Heart left ventricle (tissue), 16 donors: ENCODE measurements at regions of chr18 and their contacts with region 1.

Region 1: GRCh38 chr18:30999186-30999585 is 43.4 kb downstream of the DSC3 start:
- DNase-seq: no peak
- ATAC-seq: no peak
- H3K4me3 ChIP-seq: no peak overlapping the region
- H3K27ac ChIP-seq: no peak overlapping the region
- H3K4me1 ChIP-seq: no peaks in the 10 kb centered on the region
- H3K27me3 ChIP-seq: peaks cover 0 to 5% (median 0%) of the 10 kb centered on the region in 9 donors
- CTCF ChIP-seq: peak in 9 of 12 donors; percentile 13 to 39 (median 23)
- POLR2A ChIP-seq: no peak

Region 2: DNA sequence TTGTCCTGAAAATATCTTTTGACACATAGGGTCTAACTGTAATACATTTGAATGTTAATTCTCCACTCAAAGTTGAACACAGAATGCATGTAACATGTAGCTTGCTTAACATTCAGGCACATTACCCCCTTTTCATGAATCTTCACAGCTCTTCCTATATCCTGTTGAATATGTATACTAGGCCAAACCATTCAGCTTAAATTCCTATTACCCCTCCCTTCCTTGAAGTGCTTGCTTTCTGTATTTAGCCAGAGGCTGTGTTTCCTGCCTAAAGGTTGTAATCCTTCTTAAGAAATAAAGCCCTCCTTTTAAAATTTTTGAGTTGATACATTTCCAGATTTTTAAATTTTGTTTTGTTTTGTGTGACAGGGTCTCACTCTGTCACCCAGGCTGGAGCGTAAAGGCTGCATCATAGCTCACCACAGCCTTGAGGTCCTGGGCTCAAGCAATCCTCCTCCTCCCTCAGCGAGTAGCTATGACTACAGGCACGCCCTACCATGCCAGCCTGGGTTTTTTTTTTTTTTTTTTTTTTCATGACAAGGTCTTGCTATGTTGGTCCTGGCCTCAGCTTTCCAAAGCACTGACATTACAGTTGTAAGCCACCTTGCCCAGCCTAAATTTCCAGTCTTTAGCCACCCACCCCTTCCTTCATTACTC is 314.2 kb before region 1 on chr18:
- intact Hi-C with region 1: no loop called
- DNase-seq: no peak
- ATAC-seq: no peak
- H3K4me3 ChIP-seq: no peak overlapping the region
- H3K27ac ChIP-seq: no peak overlapping the region
- H3K4me1 ChIP-seq: no peaks in the 10 kb centered on the region
- H3K27me3 ChIP-seq: no peaks in the 10 kb centered on the region
- CTCF ChIP-seq: no peak
- POLR2A ChIP-seq: no peak

Region 3: GRCh38 chr18:30945761-30946160 is 53.4 kb before region 1 on chr18:
- intact Hi-C with region 1: no loop called
- DNase-seq: no peak
- ATAC-seq: no peak
- H3K4me3 ChIP-seq: no peak overlapping the region
- H3K27ac ChIP-seq: no peak overlapping the region
- H3K4me1 ChIP-seq: no peaks in the 10 kb centered on the region
- H3K27me3 ChIP-seq: no peaks in the 10 kb centered on the region
- CTCF ChIP-seq: no peak
- POLR2A ChIP-seq: no peak

Region 4: DNA sequence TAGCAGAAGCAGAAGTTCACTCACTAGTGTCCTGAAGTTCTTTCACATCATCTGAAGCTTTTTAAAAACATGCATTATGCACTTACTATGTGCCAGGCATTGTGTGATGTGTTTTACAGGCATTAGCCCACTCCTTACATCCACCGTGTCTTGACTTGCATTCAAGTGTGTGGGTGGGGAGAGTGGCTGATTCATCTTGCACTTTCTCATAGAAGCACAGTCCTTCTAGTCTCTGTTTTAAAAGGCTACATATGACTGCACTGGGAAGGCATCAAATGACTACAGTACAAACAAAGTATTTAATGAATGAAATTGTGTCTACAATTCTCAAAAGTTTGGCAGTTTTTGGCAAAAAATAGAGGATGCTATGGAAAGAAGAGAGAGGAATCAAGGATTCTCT is 64.9 kb after region 1 on chr18:
- intact Hi-C with region 1: no loop called
- DNase-seq: no peak
- ATAC-seq: no peak
- H3K4me3 ChIP-seq: no peak overlapping the region
- H3K27ac ChIP-seq: no peak overlapping the region
- H3K4me1 ChIP-seq: no peaks in the 10 kb centered on the region
- H3K27me3 ChIP-seq: peaks cover 0 to 2% (median 0%) of the 10 kb centered on the region in 9 donors
- CTCF ChIP-seq: no peak
- POLR2A ChIP-seq: no peak

Region 5: GRCh38 chr18:31506024-31506742 is 507.0 kb after region 1 on chr18:
- intact Hi-C with region 1: loop called in 3 of 10 experiments (anchors 10 kb)
- DNase-seq: no peak
- ATAC-seq: no peak
- H3K4me3 ChIP-seq: no peak overlapping the region
- H3K27ac ChIP-seq: no peak overlapping the region
- H3K4me1 ChIP-seq: peaks cover 0 to 6% (median 0%) of the 10 kb centered on the region in 12 donors
- H3K27me3 ChIP-seq: no peaks in the 10 kb centered on the region
- CTCF ChIP-seq: peak; percentile 15 to 65 (median 50)
- POLR2A ChIP-seq: no peak

Region 6: GRCh38 chr18:31512203-31512764 is 513.1 kb after region 1 on chr18:
- intact Hi-C with region 1: loop called in 3 of 10 experiments (anchors 10 kb)
- DNase-seq: no peak
- ATAC-seq: peak in 3 of 4 donors; percentile 60 to 69 (median 62)
- H3K4me3 ChIP-seq: no peak overlapping the region
- H3K27ac ChIP-seq: no peak overlapping the region
- H3K4me1 ChIP-seq: peaks cover 0 to 18% (median 0%) of the 10 kb centered on the region in 12 donors
- H3K27me3 ChIP-seq: no peaks in the 10 kb centered on the region
- CTCF ChIP-seq: no peak
- POLR2A ChIP-seq: no peak

Region 7: GRCh38 chr18:31563778-31564177 is 564.6 kb after region 1 on chr18:
- intact Hi-C with region 1: loop called in 1 of 10 experiments (anchors 5 kb)
- DNase-seq: no peak
- ATAC-seq: no peak
- H3K4me3 ChIP-seq: no peak overlapping the region
- H3K27ac ChIP-seq: no peak overlapping the region
- H3K4me1 ChIP-seq: peaks cover 0 to 5% (median 0%) of the 10 kb centered on the region in 12 donors
- H3K27me3 ChIP-seq: peaks cover 0 to 12% (median 0%) of the 10 kb centered on the region in 9 donors
- CTCF ChIP-seq: peak in 5 of 12 donors; percentile 5 to 28 (median 22)
- POLR2A ChIP-seq: no peak

Region 8: DNA sequence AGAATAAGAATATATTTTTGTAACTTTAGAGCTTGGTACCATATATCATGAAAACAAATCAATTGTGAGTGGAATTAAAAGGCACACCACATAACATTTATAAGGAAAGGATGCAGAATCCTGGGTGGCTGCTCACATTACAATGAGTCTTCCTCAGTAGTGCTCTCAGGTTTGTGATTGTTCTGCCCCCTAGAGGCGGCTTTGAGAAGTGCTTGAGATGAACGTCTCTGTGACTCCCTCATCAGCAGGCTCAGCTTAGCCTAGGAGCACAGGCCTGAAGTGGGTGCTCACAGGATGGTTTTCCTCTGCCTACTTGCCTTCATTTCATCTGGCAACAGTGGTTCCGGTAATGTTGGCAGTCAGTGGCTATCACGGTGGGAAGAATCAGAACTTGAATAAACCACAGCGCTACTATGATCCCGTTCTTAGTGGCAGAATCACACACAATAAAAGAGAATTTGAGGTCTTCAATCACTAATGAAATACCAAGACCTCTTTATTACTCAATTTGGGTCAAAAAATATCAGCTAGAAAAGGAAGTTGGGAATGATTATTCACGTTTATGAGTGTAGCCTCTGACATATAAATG is 723.3 kb after region 1 on chr18:
- intact Hi-C with region 1: loop called in 2 of 10 experiments (anchors 10 kb)
- DNase-seq: peak in 4 of 5 donors; percentile 51 to 75 (median 72)
- ATAC-seq: peak; percentile 63 to 90 (median 86)
- H3K4me3 ChIP-seq: no peak overlapping the region
- H3K27ac ChIP-seq: no peak overlapping the region
- H3K4me1 ChIP-seq: peaks cover 0 to 26% (median 3%) of the 10 kb centered on the region in 12 donors
- H3K27me3 ChIP-seq: peaks cover 0 to 9% (median 0%) of the 10 kb centered on the region in 9 donors
- CTCF ChIP-seq: peak; percentile 78 to 94 (median 86)
- POLR2A ChIP-seq: no peak